CD4-positive, alpha-beta T cell (primary cell): ENCODE measurements at regions of chr6 and their contacts with region 1.

Region 1: DNA sequence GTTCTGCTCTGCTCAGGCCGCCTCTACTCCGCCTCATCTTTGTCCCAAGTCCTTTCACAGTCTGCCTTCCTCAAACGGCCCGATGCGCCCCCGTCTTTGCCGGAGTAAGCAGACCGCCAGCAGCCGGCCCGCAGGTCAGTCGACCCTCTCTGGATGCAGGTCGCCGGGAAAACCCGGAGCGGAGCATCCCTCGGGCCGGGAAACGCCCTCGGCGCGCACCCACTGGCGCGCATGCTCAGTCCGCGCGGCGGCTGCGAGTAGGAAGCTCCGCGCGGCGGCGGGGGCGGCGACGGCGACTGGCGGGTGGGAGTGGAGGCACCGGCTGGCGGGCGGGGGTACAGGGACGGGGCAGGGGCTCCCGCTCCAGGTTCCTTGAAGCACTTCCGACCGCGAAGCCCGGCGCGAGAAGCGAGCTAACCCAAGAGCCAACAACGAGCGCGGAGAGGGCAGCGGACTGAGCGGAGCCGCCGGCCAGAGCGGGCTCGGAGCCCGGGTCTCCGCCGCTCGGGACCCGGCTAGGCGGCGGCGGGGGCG is at the start of gene LRRC1:
- DNase-seq: peak; percentile 65 to 91 (median 78)
- ATAC-seq: peak; percentile 63
- H3K4me3 ChIP-seq: peak within 1 kb of the TSS; percentile 83
- H3K4me3 Mint-ChIP-seq: peak within 1 kb of the TSS; percentile 97
- H3K27ac ChIP-seq: no peak within 1 kb of the TSS
- H3K27ac Mint-ChIP-seq: peak within 1 kb of the TSS; percentile 82
- H3K4me1 ChIP-seq: peaks cover 28% of the 10 kb centered on the region
- H3K4me1 Mint-ChIP-seq: peaks cover 34% of the 10 kb centered on the region
- H3K27me3 ChIP-seq: peaks cover 5 to 13% of the 10 kb centered on the region in 2 experiments
- H3K27me3 Mint-ChIP-seq: peaks cover 13% of the 10 kb centered on the region
- CTCF ChIP-seq: no peak
- total RNA-seq, gene LRRC1: 0.78 to 1.1 TPM

Region 2: DNA sequence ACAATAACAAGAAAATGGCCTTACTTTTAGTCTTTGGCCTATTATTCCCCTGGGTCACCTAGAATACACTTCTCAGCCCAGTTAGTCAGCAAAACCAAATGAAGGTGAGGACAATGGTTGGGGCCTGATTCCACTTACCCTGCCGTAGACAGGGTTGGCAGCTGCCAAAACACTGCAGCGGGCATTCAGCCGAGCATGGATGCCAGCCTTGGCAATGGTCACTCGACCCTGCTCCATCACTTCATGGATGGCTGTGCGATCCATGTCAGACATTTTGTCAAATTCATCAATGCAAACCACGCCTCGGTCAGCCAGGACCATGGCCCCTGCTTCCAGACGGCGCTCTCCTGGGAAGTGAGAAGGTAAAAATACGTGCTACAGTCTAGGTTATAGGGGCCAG is 1518.7 kb before region 1 on chr6:
- CTCF ChIA-PET with region 1: no interaction called
- POLR2A ChIA-PET with region 1: no interaction called
- intact Hi-C with region 1: loop called in 1 of 2 experiments (anchors 5 kb)
- DNase-seq: no peak
- ATAC-seq: no peak
- H3K4me3 ChIP-seq: no peak overlapping the region
- H3K4me3 Mint-ChIP-seq: no peak overlapping the region
- H3K27ac ChIP-seq: no peak overlapping the region
- H3K27ac Mint-ChIP-seq: peak overlapping the region; percentile 76
- H3K4me1 ChIP-seq: peaks cover 4% of the 10 kb centered on the region
- H3K4me1 Mint-ChIP-seq: peaks cover 37% of the 10 kb centered on the region
- H3K27me3 ChIP-seq: no peaks in the 10 kb centered on the region
- H3K27me3 Mint-ChIP-seq: no peaks in the 10 kb centered on the region
- CTCF ChIP-seq: no peak